A673 (cell line): ENCODE measurements at regions of chr4 and their contacts with region 1.

Region 1: DNA sequence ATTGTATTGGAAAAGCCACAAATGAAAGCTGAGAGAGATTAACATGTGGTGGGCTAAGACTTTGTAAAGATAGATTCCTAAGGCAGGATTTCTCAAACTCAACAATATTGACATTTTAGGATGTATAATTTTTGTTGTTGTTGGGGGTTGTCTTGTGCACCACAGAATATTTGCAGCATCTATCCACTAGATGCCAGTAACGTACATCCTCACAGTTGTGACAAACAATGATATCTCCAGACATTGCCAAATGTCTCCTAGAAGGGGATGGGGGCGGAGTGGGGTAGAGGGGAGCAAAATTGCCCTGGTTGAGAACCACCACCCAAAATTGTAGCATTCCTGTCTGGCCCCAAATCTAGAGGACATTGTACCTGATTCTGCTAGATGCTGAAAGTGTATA is 14.7 kb upstream of the CBR4 start:
- DNase-seq: peak; percentile 67
- H3K4me3 ChIP-seq: no peak overlapping the region
- H3K27ac ChIP-seq: no peak overlapping the region
- H3K4me1 ChIP-seq: no peaks in the 10 kb centered on the region
- H3K27me3 ChIP-seq: no peaks in the 10 kb centered on the region
- CTCF ChIP-seq: peak; percentile 74

Region 2: DNA sequence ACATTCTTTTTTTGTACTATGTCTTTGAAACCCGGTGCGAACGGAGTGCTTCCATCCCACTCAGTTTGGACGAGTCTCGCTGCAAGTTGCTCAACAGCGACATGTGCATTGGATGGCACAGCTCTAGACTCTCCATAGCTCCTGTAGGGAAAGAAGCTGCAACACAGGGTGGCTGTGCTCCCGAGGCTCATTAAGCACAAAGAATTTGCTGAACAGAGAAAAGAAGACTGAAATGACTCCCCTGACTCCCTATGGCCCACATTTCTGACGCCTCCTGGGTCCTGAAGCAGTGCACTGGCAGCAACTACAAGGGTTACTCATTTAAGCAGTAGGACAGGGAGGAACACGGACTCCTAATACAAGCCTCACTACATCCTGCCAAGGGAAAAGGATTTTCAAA is 118.6 kb after region 1 on chr4:
- CTCF ChIA-PET with region 1: no interaction called
- POLR2A ChIA-PET with region 1: no interaction called
- intact Hi-C with region 1: no loop called
- DNase-seq: no peak
- H3K4me3 ChIP-seq: no peak overlapping the region
- H3K27ac ChIP-seq: no peak overlapping the region
- H3K4me1 ChIP-seq: peaks cover 8% of the 10 kb centered on the region
- H3K27me3 ChIP-seq: no peaks in the 10 kb centered on the region
- CTCF ChIP-seq: no peak

Region 3: GRCh38 chr4:169270810-169271691 is 246.3 kb after region 1 on chr4 and contains the start of gene SH3RF1:
- CTCF ChIA-PET with region 1: no interaction called
- POLR2A ChIA-PET with region 1: no interaction called
- intact Hi-C with region 1: loop called (anchors 2 kb)
- DNase-seq: peak; percentile 93
- H3K4me3 ChIP-seq: peak within 1 kb of the TSS; percentile 86
- H3K27ac ChIP-seq: peak within 1 kb of the TSS; percentile 90
- H3K4me1 ChIP-seq: peaks cover 28% of the 10 kb centered on the region
- H3K27me3 ChIP-seq: no peaks in the 10 kb centered on the region
- CTCF ChIP-seq: peak; percentile 41
- total RNA-seq, gene SH3RF1: 15.3 and 15.4 TPM in 2 replicates

Region 4: DNA sequence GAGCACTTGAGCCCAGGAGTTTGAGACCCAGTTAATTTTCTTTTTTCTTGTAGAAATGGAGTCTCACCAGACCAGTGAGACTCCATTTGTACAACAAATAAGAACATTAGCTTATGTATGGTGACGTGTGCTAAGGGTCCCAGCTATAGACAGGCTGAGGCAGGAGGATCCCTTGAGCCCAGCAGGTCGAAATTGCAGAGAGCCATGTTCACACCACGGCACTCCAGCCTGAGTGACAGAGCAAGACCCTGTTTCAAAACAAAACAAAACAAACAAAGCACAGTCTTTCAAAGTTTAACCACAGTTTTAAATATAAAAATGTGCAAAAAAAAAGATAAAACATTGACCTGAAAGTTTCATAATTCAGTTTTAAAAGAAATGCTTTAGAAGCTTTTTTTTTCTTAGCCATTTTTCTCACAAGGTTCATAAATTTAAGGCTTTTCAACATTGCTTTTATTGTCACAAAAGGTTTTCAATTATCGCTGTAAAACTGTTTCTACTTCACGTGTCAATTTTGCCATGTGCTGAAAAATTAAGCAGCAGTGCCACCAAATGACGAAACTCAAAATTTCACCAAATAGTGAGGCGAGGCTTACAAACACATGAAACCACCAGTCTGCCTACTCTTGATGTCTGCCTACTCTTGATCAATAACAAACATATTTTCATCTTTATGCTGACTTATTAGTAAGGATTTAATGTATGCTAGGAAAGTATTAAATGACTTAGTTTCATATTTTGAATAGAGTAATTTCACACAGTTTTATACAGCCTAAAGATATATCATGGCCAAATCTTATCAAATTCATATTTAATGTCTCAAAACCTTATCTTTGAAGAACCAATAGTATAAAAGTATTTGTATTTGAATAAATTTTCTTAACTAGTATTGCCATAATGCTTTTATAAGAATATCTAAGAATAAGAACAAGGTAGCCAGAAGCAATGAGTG is 461.3 kb after region 1 on chr4:
- CTCF ChIA-PET with region 1: no interaction called
- POLR2A ChIA-PET with region 1: no interaction called
- intact Hi-C with region 1: loop called (anchors 2 kb)
- DNase-seq: peak; percentile 76
- H3K4me3 ChIP-seq: no peak overlapping the region
- H3K27ac ChIP-seq: no peak overlapping the region
- H3K4me1 ChIP-seq: no peaks in the 10 kb centered on the region
- H3K27me3 ChIP-seq: no peaks in the 10 kb centered on the region
- CTCF ChIP-seq: peak; percentile 73